Panc1 (cell line): ENCODE measurements at regions of chr1 and their contacts with region 1.

Region 1: GRCh38 chr1:29002792-29003191 is 88.4 kb downstream of the EPB41 start:
- DNase-seq: no peak
- ATAC-seq: no peak
- H3K4me3 ChIP-seq: no peak overlapping the region
- H3K27ac ChIP-seq: no peak overlapping the region
- H3K4me1 ChIP-seq: no peaks in the 10 kb centered on the region
- H3K27me3 ChIP-seq: no peaks in the 10 kb centered on the region
- CTCF ChIP-seq: no peak

Region 2: DNA sequence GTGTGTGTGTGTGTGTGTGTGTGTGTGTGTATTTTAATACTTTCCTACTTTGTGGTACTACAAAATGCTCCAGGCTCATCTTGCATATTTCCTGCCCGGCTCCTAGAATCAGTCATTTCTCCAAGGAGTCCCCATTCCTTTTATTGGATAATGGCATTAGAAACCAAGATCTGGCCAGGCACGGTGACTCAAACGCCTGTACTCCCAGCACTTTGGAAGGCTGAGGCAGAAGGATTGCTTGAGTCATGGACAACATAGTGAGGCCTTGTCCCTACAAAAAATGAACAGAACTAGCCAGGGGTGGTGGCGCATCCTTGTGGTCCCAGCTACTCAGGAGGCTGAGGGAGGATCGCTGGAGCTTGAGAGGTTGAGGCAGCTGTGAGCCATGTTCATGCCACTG is 68.1 kb before region 1 on chr1:
- CTCF ChIA-PET with region 1: no interaction called
- POLR2A ChIA-PET with region 1: interaction called, 14 read pairs
- in situ Hi-C with region 1: no loop called
- intact Hi-C with region 1: no loop called
- DNase-seq: no peak
- ATAC-seq: no peak
- H3K4me3 ChIP-seq: no peak overlapping the region
- H3K27ac ChIP-seq: no peak overlapping the region
- H3K4me1 ChIP-seq: no peaks in the 10 kb centered on the region
- H3K27me3 ChIP-seq: no peaks in the 10 kb centered on the region
- CTCF ChIP-seq: no peak